Head of caudate nucleus (tissue), 42 donors: ENCODE measurements at regions of chr3 and their contacts with region 1.

Region 1: GRCh38 chr3:181567311-181568075 is 144.2 kb upstream of the SOX2 start:
- DNase-seq: no peak

Region 2: GRCh38 chr3:181457190-181457589 is 110.3 kb before region 1 on chr3:
- intact Hi-C with region 1: loop called (anchors 5 kb)
- DNase-seq: peak; percentile 78 to 99 (median 93)

Region 3: GRCh38 chr3:181486141-181486885 is 81.2 kb before region 1 on chr3:
- intact Hi-C with region 1: no loop called
- DNase-seq: peak in 5 of 42 donors; percentile 5 to 29 (median 8)

Region 4: GRCh38 chr3:181610083-181610972 is 42.8 kb after region 1 on chr3:
- intact Hi-C with region 1: loop called (anchors 5 kb)
- DNase-seq: no peak